AG04449 (cell line): ENCODE measurements at regions of chrX and their contacts with region 1.

Region 1: DNA sequence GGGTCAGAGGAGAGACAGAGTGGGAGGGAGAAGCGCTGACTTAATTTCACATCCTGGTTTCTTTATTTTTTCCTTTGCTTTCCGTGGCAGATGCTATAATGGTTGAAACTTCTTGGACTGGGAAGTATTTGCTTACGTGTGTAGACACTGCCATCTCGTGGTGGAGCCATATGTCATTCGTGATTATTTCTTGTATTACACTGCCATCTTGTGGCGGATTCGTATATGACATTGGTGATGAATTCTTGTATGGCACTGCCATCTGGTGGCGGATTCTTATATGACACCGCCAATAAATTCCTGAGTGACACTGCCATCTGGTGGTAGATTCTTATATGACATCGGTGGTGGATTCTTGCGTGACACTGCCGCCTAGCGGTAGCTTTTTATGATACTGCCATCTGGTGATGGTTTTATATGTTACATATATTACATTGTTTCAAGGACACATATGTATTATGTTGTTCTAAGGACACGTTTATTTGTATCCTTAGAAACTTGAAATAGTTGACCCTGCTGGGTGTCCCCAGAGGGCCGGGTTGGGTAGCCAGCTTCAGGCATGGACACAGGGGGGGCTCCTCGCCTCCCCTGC is 37.3 kb upstream of the CLCN4 start:
- DNase-seq: peak; percentile 55
- H3K4me3 ChIP-seq: no peak overlapping the region
- CTCF ChIP-seq: peak; percentile 48

Region 2: DNA sequence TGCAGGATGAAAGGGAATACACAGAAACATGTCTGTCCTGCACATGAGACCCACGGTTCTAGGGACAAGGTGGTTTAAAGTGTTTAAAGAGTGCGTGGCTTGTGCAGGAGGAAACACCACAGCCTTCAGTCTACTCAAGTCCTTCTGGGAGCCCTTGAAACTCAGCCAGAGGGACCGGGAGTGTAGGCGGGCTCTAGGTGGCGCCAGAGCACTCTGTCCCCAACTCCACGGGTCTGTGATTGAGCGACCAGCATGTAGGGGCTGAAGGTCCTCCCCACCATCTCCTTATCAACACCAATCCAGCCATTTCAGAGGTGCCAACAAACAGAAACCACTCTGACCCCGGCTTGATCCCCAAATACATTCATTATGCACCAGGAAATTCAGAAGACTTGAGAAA is 234.3 kb before region 1 on chrX:
- CTCF ChIA-PET with region 1: interaction called, 20 read pairs
- POLR2A ChIA-PET with region 1: no interaction called
- DNase-seq: no peak
- H3K4me3 ChIP-seq: no peak overlapping the region
- CTCF ChIP-seq: peak; percentile 70

Region 3: GRCh38 chrX:9980927-9981326 is 138.6 kb before region 1 on chrX:
- CTCF ChIA-PET with region 1: interaction called, 33 read pairs
- POLR2A ChIA-PET with region 1: no interaction called
- DNase-seq: no peak
- H3K4me3 ChIP-seq: no peak overlapping the region
- CTCF ChIP-seq: no peak

Region 4: DNA sequence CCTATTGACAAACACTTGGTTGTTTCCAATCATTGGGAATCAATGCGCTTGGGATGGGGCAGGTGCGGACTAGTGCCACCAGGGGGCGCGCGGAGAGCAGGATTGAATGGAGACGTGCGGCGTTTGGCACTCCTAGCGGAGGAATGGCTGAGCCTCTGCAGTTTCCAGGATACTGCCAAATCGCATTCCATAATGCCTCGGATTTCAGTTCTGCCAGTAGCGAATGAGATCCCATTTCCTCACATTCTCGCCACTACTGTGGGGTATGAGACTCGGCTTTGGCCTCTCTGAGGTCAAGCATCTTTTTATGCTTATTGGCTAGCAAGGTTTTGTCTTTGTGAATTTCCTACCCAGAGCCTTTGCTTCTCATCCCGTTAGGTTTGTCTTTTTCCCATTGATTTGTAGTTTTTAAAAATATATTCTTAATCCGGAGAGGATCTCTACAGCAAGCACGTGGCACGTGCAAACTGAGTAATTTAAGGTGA is 123.6 kb before region 1 on chrX:
- CTCF ChIA-PET with region 1: interaction called, 281 read pairs
- POLR2A ChIA-PET with region 1: no interaction called
- DNase-seq: no peak
- H3K4me3 ChIP-seq: no peak overlapping the region
- CTCF ChIP-seq: peak; percentile 85

Region 5: GRCh38 chrX:10014462-10015356 is 104.8 kb before region 1 on chrX:
- CTCF ChIA-PET with region 1: interaction called, 21 read pairs
- POLR2A ChIA-PET with region 1: no interaction called
- DNase-seq: no peak
- H3K4me3 ChIP-seq: peak overlapping the region; percentile 58
- CTCF ChIP-seq: no peak

Region 6: DNA sequence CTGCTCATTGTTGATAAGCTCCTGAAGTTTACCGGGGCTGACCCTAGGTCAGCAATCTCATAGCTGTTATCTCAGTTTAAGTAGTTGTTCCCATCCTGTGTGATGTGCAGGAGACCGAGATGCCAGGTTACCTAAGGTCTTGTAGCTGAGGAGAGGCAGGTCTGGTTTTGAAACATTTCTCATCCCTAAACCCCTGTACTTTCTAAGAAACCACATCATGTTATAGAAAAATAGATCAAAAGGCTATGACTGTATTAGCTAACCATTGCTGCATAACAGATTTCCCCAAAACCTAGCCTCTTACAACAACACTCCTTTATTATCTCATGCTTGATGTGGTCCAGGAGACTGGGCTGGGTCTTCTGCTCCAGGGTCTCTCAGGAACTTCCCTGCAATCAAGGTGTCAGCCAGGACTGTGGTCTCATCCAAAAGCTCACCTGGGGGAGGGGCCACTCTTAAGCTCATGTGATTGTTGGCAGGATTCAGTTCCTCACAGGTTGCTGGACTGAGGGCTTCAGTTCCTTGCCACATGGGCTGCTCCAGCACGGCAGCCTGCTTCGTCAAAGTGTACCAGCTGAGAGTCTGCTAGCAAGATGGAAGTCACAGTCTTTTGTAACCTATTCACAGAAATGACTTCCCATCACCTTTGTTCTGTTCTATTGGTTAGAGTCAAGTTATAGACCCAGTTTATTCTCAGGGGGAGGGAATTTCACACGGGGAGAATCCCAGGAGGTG is 23.6 kb before region 1 on chrX:
- CTCF ChIA-PET with region 1: interaction called, 19 read pairs
- POLR2A ChIA-PET with region 1: no interaction called
- DNase-seq: no peak
- H3K4me3 ChIP-seq: no peak overlapping the region
- CTCF ChIP-seq: no peak

Region 7: GRCh38 chrX:10133980-10134676 is 14.6 kb after region 1 on chrX:
- CTCF ChIA-PET with region 1: interaction called, 19 read pairs
- POLR2A ChIA-PET with region 1: no interaction called
- DNase-seq: no peak
- H3K4me3 ChIP-seq: no peak overlapping the region
- CTCF ChIP-seq: no peak